Caco-2 (cell line): ENCODE measurements at regions of chr20 and their contacts with region 1.

Region 1: DNA sequence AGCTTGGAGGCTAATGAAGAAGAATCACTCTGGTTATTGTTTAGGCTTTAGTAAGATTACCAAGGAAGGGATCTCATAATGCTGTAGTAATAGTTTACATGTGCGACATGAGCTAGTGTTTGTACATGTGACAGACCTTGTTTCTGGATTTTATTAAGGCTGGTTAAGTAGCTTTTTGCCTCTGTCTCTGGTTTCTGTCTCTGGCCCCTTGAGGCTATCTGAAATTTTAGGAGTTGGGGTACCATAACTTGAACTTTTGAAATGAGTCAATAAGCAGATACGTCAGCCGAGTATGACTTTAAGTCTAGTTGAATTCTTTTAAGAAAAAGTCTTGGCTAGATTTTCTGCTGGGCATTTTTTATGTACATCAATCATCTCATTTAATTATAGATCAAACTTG is 9.5 kb downstream of the CBFA2T2 start:
- DNase-seq: no peak
- H3K4me3 ChIP-seq: no peak overlapping the region
- H3K4me3 Mint-ChIP-seq: no peak overlapping the region
- H3K27ac Mint-ChIP-seq: no peak overlapping the region
- H3K4me1 ChIP-seq: no peaks in the 10 kb centered on the region
- H3K4me1 Mint-ChIP-seq: no peaks in the 10 kb centered on the region
- H3K27me3 ChIP-seq: no peaks in the 10 kb centered on the region
- H3K27me3 Mint-ChIP-seq: no peaks in the 10 kb centered on the region
- CTCF ChIP-seq: no peak

Region 2: DNA sequence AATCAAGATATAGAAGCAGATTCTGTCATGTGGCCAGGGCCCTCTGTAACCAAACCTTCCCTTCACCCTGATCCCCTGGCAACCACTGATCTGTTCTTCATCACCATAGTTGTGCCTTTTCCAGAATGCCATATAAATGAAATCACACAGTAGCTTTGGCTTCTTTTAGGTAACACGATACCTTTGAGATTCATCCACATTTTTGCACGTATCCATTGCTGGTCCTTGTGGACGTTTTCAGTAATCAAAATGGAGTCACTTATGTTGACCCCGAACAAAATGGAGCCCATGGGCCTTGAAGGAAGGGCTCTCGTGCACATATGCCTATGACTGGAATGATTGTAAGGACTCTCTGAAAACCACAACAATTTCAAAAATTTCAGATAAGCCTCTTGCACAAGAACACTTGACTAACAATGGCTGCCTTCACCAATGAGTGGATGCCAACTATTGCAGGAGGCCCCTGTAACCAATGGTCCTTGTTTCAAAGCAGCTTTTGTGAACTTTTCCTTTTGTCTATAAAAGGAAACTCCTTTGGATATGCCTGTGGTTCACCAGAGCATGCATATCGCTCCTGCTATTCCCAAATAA is 410.1 kb after region 1 on chr20:
- CTCF ChIA-PET with region 1: interaction called, 13 read pairs
- POLR2A ChIA-PET with region 1: no interaction called
- intact Hi-C with region 1: no loop called
- DNase-seq: peak; percentile 86 to 88
- H3K4me3 ChIP-seq: no peak overlapping the region
- H3K4me3 Mint-ChIP-seq: peak overlapping the region; percentile 2
- H3K27ac Mint-ChIP-seq: peak overlapping the region; percentile 87
- H3K4me1 ChIP-seq: peaks cover 39% of the 10 kb centered on the region
- H3K4me1 Mint-ChIP-seq: peaks cover 41% of the 10 kb centered on the region
- H3K27me3 ChIP-seq: no peaks in the 10 kb centered on the region
- H3K27me3 Mint-ChIP-seq: no peaks in the 10 kb centered on the region
- CTCF ChIP-seq: no peak